K562 (cell line): ENCODE measurements at regions of chr11 and their contacts with region 1.

Region 1: DNA sequence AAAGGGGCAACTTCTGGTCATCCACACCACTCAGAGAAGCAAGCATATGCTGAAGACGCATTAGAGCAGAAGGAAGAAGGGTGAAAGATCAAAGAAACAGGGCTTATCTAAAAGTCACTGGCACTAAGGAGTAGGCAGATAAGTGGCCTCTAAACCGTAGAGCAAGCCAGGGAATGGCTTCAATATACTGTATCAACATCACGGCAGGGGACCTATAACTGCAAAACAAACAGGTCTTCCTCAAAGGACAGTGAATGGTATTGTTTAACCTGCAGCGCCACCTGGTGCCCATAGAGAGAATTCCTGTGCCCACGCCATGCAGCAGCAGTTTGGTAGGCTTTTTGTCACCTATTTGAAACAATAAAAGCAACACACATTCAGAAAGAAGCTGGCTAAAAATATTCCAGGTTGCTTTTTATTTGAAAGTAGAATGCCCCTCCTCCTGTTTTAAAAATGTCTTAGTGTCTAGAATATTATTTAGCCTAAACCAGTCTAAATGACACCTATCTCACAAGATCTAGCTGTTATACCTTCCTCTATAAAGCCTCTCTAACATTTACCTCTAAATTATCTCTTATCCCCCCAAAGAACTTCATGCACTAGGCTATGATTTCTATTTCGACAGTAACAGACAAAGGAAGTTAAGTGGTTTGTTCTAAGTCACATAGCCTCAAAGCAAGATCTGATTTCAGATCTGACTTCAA is 21.8 kb downstream of the SNX19 start:
- DNase-seq: peak; percentile 62 to 81 (median 62)
- ATAC-seq: peak; percentile 100
- H3K4me3 ChIP-seq: no peak overlapping the region
- H3K27ac ChIP-seq: no peak overlapping the region
- H3K4me1 ChIP-seq: peaks cover 0 to 4% of the 10 kb centered on the region in 2 experiments; a peak in 2 of 5 replicates
- H3K27me3 ChIP-seq: no peaks in the 10 kb centered on the region
- CTCF ChIP-seq: peak; percentile 64 to 83 (median 83)
- EP300 ChIP-seq: no peak
- POLR2A ChIP-seq: no peak
- RAD21 ChIP-seq: peak; percentile 51 to 64

Region 2: GRCh38 chr11:130861902-130862860 is 32.3 kb before region 1 on chr11:
- CTCF ChIA-PET with region 1: interaction called, 9 read pairs
- POLR2A ChIA-PET with region 1: interaction called, 3 read pairs
- in situ Hi-C with region 1: no loop called
- intact Hi-C with region 1: loop called (anchors 1 kb)
- DNase-seq: peak; percentile 81 to 94 (median 87)
- ATAC-seq: peak; percentile 94
- H3K4me3 ChIP-seq: no peak overlapping the region
- H3K27ac ChIP-seq: no peak overlapping the region
- H3K4me1 ChIP-seq: peaks cover 0 to 3% of the 10 kb centered on the region in 2 experiments; a peak in 1 of 5 replicates
- H3K27me3 ChIP-seq: peaks cover 8 to 20% of the 10 kb centered on the region in 2 experiments
- CTCF ChIP-seq: peak; percentile 100
- EP300 ChIP-seq: no peak
- POLR2A ChIP-seq: no peak
- RAD21 ChIP-seq: peak; percentile 96 to 99